GM12878 (cell line): ENCODE measurements at regions of chr5 and their contacts with region 1.

Region 1: DNA sequence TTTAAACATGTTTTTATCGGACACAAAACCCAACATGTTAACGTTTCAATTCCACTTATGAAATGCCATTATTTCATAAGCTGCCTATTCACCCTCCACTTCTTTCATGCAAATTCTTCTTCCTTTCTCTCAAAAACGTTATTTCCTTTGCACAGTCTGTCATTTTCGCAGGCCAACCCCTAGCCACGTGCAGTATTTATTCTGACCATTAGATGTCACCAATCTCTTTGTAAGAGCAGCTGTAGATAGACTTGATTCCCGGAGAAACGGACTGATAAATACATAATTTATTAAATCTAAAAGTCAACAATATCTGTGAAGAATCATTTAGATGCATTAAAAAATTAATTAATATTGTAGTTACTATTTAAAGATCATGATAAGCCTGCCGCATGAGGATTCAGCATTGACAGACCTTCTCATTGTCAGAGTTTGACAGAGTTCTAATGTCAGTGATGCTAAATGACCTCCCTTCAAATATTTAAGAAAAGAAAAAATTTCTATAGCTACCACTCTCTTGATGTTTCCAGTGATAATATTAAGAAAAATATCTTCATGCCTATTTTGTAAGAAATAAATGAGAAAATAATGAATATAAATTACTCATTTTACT is 933.6 kb downstream of the CDH12 start:
- DNase-seq: peak; percentile 13
- ATAC-seq: peak; percentile 95
- H3K4me3 ChIP-seq: no peak overlapping the region
- H3K27ac ChIP-seq: no peak overlapping the region
- H3K4me1 ChIP-seq: no peaks in the 10 kb centered on the region
- H3K27me3 ChIP-seq: no peaks in the 10 kb centered on the region
- CTCF ChIP-seq: peak; percentile 62 to 81 (median 66)
- EP300 ChIP-seq: no peak
- POLR2A ChIP-seq: no peak
- RAD21 ChIP-seq: peak; percentile 75

Region 2: GRCh38 chr5:21823588-21823987 is 95.9 kb before region 1 on chr5:
- CTCF ChIA-PET with region 1: no interaction called
- POLR2A ChIA-PET with region 1: no interaction called
- RAD21 ChIA-PET with region 1: no interaction called
- SMC1A ChIA-PET with region 1: no interaction called
- in situ Hi-C with region 1: no loop called
- intact Hi-C with region 1: loop called (anchors 5 kb)
- DNase-seq: no peak
- ATAC-seq: peak; percentile 46; the same call in 2 of the 3 replicates
- H3K4me3 ChIP-seq: no peak overlapping the region
- H3K27ac ChIP-seq: no peak overlapping the region
- H3K4me1 ChIP-seq: no peaks in the 10 kb centered on the region
- H3K27me3 ChIP-seq: no peaks in the 10 kb centered on the region
- CTCF ChIP-seq: no peak
- EP300 ChIP-seq: no peak
- POLR2A ChIP-seq: no peak
- RAD21 ChIP-seq: no peak

Region 3: GRCh38 chr5:22683050-22683449 is 763.5 kb after region 1 on chr5:
- CTCF ChIA-PET with region 1: no interaction called
- POLR2A ChIA-PET with region 1: no interaction called
- RAD21 ChIA-PET with region 1: no interaction called
- SMC1A ChIA-PET with region 1: no interaction called
- in situ Hi-C with region 1: no loop called
- intact Hi-C with region 1: loop called (anchors 10 kb)
- DNase-seq: no peak
- ATAC-seq: no peak
- H3K4me3 ChIP-seq: no peak overlapping the region
- H3K27ac ChIP-seq: no peak overlapping the region
- H3K4me1 ChIP-seq: no peaks in the 10 kb centered on the region
- H3K27me3 ChIP-seq: no peaks in the 10 kb centered on the region
- CTCF ChIP-seq: no peak
- EP300 ChIP-seq: no peak
- POLR2A ChIP-seq: no peak
- RAD21 ChIP-seq: no peak